H1 (cell line): ENCODE measurements at regions of chr1 and their contacts with region 1.

Region 1: GRCh38 chr1:204746838-204747442 is 61.4 kb upstream of the LRRN2 start:
- DNase-seq: peak; percentile 43 to 75
- H3K4me3 ChIP-seq: no peak overlapping the region
- H3K27ac ChIP-seq: no peak overlapping the region
- H3K4me1 ChIP-seq: peaks cover 0 to 6% (median 4%) of the 10 kb centered on the region in 4 experiments; a peak in 5 of 7 replicates
- H3K27me3 ChIP-seq: no peaks in the 10 kb centered on the region
- CTCF ChIP-seq: peak; percentile 80 to 97 (median 82)
- EP300 ChIP-seq: no peak
- POLR2A ChIP-seq: no peak
- RAD21 ChIP-seq: peak; percentile 55 to 65

Region 2: DNA sequence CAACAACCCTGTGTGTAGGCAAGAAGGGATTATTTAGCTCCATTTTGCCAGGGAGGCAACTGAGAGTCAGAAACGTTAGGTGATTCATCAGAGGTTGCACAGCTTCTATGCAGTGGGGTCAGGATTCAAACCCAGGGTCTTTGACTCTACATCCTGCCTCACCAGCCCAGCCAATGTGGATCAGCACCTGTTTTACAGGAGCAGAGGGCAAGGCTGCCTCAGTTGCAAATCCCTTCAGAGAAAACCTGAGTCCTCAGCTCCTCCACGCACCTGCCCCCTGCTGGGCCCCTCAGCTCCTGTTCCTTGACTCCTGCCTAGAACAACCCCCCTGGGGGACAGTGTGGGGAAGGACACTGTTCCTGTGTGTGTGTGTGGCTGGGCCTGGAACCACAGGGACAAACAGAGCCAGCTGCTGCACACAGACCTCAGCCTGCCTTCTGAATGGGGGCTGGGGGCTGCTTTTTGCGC is 123.0 kb before region 1 on chr1:
- CTCF ChIA-PET with region 1: interaction called, 17 read pairs
- POLR2A ChIA-PET with region 1: no interaction called
- DNase-seq: no peak
- H3K4me3 ChIP-seq: no peak overlapping the region
- H3K27ac ChIP-seq: no peak overlapping the region
- H3K4me1 ChIP-seq: peaks cover 3 to 11% (median 6%) of the 10 kb centered on the region in 4 experiments; a peak in 6 of 7 replicates
- H3K27me3 ChIP-seq: no peaks in the 10 kb centered on the region
- CTCF ChIP-seq: peak; percentile 40 to 81 (median 44)
- EP300 ChIP-seq: no peak
- POLR2A ChIP-seq: no peak
- RAD21 ChIP-seq: peak; percentile 31 to 48; a peak in 3 of 4 replicates

Region 3: GRCh38 chr1:204670152-204670927 is 76.6 kb before region 1 on chr1:
- CTCF ChIA-PET with region 1: interaction called, 10 read pairs
- POLR2A ChIA-PET with region 1: no interaction called
- DNase-seq: no peak
- H3K4me3 ChIP-seq: no peak overlapping the region
- H3K27ac ChIP-seq: no peak overlapping the region
- H3K4me1 ChIP-seq: peaks cover 0 to 6% (median 3%) of the 10 kb centered on the region in 4 experiments; a peak in 3 of 7 replicates
- H3K27me3 ChIP-seq: no peaks in the 10 kb centered on the region; a peak in 2 of 7 replicates
- CTCF ChIP-seq: no peak
- EP300 ChIP-seq: no peak
- POLR2A ChIP-seq: no peak
- RAD21 ChIP-seq: no peak

Region 4: GRCh38 chr1:204692325-204692840 is 54.6 kb before region 1 on chr1:
- CTCF ChIA-PET with region 1: interaction called, 34 read pairs
- POLR2A ChIA-PET with region 1: no interaction called
- DNase-seq: peak in 1 of 2 experiments; percentile 53
- H3K4me3 ChIP-seq: peak overlapping the region in 1 of 4 experiments; percentile 12; a peak in 1 of 8 replicates
- H3K27ac ChIP-seq: no peak overlapping the region
- H3K4me1 ChIP-seq: peaks cover 1 to 4% (median 2%) of the 10 kb centered on the region in 4 experiments; a peak in 5 of 7 replicates
- H3K27me3 ChIP-seq: peaks cover 0 to 5% (median 5%) of the 10 kb centered on the region in 4 experiments; a peak in 3 of 7 replicates
- CTCF ChIP-seq: peak; percentile 5 to 30 (median 23)
- EP300 ChIP-seq: no peak
- POLR2A ChIP-seq: no peak
- RAD21 ChIP-seq: peak; percentile 41 to 54; a peak in 3 of 4 replicates

Region 5: DNA sequence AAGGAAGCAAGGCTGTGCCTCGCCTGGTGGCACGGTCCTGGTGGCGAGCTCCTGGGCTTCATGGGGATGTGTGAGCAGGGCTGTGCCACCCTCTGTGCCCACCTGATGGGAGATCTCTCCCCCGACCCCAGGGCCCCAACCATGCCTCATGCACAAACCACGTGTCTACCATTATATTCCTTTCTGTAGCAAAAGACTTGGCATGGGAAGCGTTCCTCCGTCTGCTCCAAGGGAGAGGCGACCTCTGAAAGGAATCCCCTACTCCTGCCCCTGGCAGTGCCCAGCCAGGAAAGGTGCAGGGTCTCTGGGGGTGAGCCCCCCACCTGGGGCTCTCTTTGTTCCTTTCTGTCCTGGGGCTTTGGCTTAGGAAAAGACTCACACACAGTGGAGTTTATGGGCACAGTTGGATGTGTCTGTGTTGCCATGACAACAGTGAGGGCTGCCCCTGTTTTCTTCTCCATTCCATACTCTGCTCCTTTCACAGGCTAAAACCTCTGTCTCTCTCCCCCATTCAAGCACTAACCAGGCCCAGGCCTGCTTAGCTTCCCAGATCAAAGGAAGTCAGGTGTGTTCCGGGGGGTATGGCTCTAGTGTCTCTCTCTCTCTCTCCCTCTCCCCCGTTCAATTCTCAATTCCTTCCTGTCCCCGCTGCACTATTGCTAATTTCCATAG is 40.0 kb before region 1 on chr1:
- CTCF ChIA-PET with region 1: interaction called, 35 read pairs
- POLR2A ChIA-PET with region 1: no interaction called
- DNase-seq: peak in 1 of 2 experiments; percentile 69
- H3K4me3 ChIP-seq: peak overlapping the region in 1 of 4 experiments; percentile 10; a peak in 3 of 8 replicates
- H3K27ac ChIP-seq: no peak overlapping the region
- H3K4me1 ChIP-seq: peaks cover 31 to 43% (median 32%) of the 10 kb centered on the region in 4 experiments
- H3K27me3 ChIP-seq: peaks cover 22 to 55% (median 47%) of the 10 kb centered on the region in 4 experiments
- CTCF ChIP-seq: no peak
- EP300 ChIP-seq: 0 out of 3 replicates have a peak, but pooled peaks of 1 of the 2 experiments have one; percentile 5
- POLR2A ChIP-seq: no peak
- RAD21 ChIP-seq: no peak

Region 6: GRCh38 chr1:204723131-204723787 is 23.7 kb before region 1 on chr1:
- CTCF ChIA-PET with region 1: interaction called, 35 read pairs
- POLR2A ChIA-PET with region 1: no interaction called
- DNase-seq: peak in 1 of 2 experiments; percentile 23
- H3K4me3 ChIP-seq: no peak overlapping the region
- H3K27ac ChIP-seq: no peak overlapping the region
- H3K4me1 ChIP-seq: peaks cover 0 to 4% (median 1%) of the 10 kb centered on the region in 4 experiments; a peak in 2 of 7 replicates
- H3K27me3 ChIP-seq: peaks cover 0 to 2% (median 0%) of the 10 kb centered on the region in 4 experiments; a peak in 3 of 7 replicates
- CTCF ChIP-seq: no peak
- EP300 ChIP-seq: no peak
- POLR2A ChIP-seq: no peak
- RAD21 ChIP-seq: no peak

Region 7: DNA sequence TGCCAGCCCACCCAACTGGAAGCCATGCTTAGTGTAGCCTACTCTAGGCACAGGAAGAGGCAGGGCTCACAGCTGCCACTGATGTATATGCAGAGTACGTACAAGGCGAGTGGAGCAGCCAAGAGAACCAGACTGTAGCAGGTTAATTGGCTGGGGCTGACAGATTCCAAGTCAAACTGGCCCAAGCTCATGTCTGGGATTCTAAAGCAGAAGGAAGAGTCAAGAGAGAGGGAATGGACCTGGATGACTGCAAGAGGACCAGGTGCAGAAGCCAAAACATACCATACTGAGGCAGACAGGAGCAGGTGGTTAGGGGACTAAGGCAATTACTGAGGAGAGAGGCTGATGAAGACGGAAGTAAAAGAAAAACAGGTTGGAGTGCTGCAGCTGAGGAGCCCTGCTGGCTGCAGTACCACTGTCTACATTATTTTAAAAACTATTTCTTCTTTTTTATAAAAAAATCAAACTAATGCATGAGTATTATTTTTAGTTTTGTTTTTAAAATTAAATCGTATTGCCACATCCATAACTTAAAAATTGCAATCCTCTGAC is 10.0 kb before region 1 on chr1:
- CTCF ChIA-PET with region 1: interaction called, 40 read pairs
- POLR2A ChIA-PET with region 1: interaction called, 3 read pairs
- DNase-seq: peak in 1 of 2 experiments; percentile 26
- H3K4me3 ChIP-seq: no peak overlapping the region
- H3K27ac ChIP-seq: no peak overlapping the region
- H3K4me1 ChIP-seq: no peaks in the 10 kb centered on the region
- H3K27me3 ChIP-seq: no peaks in the 10 kb centered on the region; a peak in 1 of 7 replicates
- CTCF ChIP-seq: no peak
- EP300 ChIP-seq: no peak
- POLR2A ChIP-seq: no peak
- RAD21 ChIP-seq: no peak